H1 (cell line): ENCODE measurements at regions of chr2 and their contacts with region 1.

Region 1: DNA sequence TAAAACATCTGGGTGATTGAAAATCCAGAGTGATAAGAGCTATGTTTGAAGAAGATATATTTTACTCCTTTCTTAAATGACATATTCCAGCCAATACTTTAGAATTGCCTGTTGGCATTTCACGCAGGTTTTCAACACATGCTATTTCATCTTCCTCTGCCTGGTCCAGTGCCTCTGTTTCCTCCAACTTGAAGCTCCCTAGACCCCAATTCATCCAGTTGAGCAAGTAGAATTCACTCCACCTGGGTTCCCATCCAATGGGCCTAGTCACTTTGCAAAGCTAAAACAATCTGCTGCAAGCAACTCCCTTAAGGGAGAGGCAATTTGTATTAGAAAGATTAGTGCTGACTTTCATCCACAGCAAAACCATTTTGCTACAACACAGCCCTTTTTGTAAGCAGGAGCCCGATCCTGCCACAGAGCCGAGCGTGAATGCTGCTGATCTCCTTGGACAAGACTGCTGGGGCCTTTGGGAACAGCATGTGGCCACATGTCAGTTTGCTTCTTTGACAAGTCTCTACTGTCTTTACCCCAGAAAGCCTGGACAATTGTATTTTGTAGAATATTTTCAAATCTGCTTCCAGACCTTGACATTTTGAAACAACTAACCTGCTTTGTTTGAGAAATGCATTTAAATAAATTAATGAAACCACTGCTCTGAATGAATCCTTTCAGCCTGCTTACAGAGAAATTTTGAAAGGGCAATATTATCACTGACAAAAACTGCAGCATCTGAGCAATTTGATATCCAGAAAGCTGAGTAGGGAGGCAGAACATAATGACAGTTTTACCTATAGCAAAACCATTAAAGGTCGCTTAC is 259.1 kb downstream of the TDRD15 start:
- DNase-seq: no peak
- H3K4me3 ChIP-seq: no peak overlapping the region
- H3K27ac ChIP-seq: no peak overlapping the region
- H3K4me1 ChIP-seq: no peaks in the 10 kb centered on the region
- H3K27me3 ChIP-seq: no peaks in the 10 kb centered on the region
- CTCF ChIP-seq: no peak
- EP300 ChIP-seq: no peak
- POLR2A ChIP-seq: no peak
- RAD21 ChIP-seq: no peak

Region 2: GRCh38 chr2:21372654-21373053 is 10.3 kb before region 1 on chr2:
- CTCF ChIA-PET with region 1: interaction called, 10 read pairs
- POLR2A ChIA-PET with region 1: no interaction called
- DNase-seq: peak in 1 of 2 experiments; percentile 52
- H3K4me3 ChIP-seq: no peak overlapping the region
- H3K27ac ChIP-seq: no peak overlapping the region
- H3K4me1 ChIP-seq: no peaks in the 10 kb centered on the region
- H3K27me3 ChIP-seq: no peaks in the 10 kb centered on the region
- CTCF ChIP-seq: peak in 2 of 3 experiments; percentile 63 to 79; a peak in 3 of 4 replicates
- EP300 ChIP-seq: no peak
- POLR2A ChIP-seq: no peak
- RAD21 ChIP-seq: peak; percentile 61 to 69